ENCODE measurements at regions of chr20 and their contacts with region 1.

Region 1: DNA sequence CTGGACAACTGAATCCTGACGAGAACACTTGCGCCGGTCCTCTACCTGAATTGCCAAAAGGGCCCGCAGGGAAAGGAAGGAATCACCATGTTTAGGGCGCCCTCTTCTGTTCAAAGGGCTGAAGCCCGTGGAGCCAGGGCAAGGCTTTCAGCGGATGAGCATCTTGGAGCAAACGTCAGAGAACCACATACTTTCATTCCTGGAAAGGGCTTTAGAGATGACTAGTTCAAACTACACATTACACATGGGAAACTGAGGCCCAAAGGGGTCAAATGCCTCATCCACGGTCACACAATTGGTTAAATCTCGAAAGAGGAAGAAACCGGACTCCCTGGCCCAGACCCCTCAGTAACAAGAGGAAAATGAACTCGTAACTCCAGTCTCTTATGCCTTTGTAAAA is 11.5 kb upstream of the ZNF133 start:
- DNase-seq: peak; percentile 95
- ATAC-seq: peak; percentile 96
- H3K4me3 ChIP-seq: peak overlapping the region; percentile 41; the same call in 1 of the 2 replicates
- H3K27ac ChIP-seq: no peak overlapping the region
- H3K4me1 ChIP-seq: peaks cover 9% of the 10 kb centered on the region; the same call in 1 of the 2 replicates
- H3K27me3 ChIP-seq: no peaks in the 10 kb centered on the region
- CTCF ChIP-seq: peak; percentile 97

Region 2: DNA sequence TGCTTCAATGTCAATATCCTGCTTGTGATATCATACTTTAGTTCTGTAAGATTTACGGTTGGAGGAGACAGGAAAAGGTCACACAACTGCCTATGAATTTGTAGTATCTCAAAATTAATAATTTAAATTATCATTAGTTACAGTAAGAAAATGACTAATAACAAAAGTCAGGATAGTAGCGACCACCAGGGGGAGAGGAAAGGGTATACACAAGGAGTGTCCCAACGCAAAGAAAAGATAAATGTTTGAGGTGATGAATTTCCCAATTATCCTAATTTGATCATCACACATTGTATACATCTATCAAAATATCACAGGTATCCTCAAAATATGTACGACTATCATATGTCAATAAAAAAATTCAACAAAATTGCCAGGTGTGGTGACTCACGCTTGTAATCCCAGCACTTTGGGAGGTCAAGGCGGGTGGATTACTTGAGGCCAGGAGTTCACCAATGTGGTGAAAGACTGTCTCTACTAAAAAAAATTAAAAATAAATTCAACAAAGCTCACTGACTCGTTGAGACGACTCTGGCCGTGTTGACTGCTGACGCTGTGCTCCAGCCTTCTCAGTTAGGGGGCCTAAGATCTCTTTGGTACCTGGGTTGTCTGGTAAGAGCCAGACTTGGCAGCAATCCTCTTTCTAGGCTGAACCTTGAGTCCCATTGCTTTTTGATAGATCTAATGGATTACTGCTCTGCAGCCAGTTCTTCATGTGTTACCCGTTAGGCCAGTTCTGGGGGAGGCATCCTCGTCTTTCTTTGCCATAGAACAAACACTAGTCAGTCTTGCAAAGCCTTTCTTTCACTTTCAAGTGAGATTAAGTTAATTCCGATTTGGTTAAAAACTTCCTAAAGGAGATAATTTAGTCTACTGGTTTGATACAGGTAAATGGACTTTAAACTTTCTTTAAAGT is 210.1 kb before region 1 on chr20:
- CTCF ChIA-PET with region 1: no interaction called
- POLR2A ChIA-PET with region 1: no interaction called
- intact Hi-C with region 1: loop called (anchors 1 kb)
- DNase-seq: peak; percentile 58
- ATAC-seq: no peak; the same call in 1 of the 2 replicates
- H3K4me3 ChIP-seq: no peak overlapping the region
- H3K27ac ChIP-seq: no peak overlapping the region
- H3K4me1 ChIP-seq: peaks cover 6% of the 10 kb centered on the region; the same call in 1 of the 2 replicates
- H3K27me3 ChIP-seq: no peaks in the 10 kb centered on the region
- CTCF ChIP-seq: peak; percentile 51

Region 3: GRCh38 chr20:18137412-18138265 is 139.2 kb before region 1 on chr20 and contains the starts of genes KAT14 and PET117:
- CTCF ChIA-PET with region 1: no interaction called
- POLR2A ChIA-PET with region 1: no interaction called
- intact Hi-C with region 1: loop called (anchors 2 kb)
- DNase-seq: peak; percentile 95
- ATAC-seq: peak; percentile 88
- H3K4me3 ChIP-seq: peak within 1 kb of the TSS; percentile 92
- H3K27ac ChIP-seq: peak within 1 kb of the TSS; percentile 69
- H3K4me1 ChIP-seq: peaks cover 33% of the 10 kb centered on the region
- H3K27me3 ChIP-seq: no peaks in the 10 kb centered on the region
- CTCF ChIP-seq: no peak
- total RNA-seq, gene KAT14: 10.8 and 12.5 TPM in 2 replicates
- total RNA-seq, gene PET117: 21.2 and 31.2 TPM in 2 replicates

Region 4: DNA sequence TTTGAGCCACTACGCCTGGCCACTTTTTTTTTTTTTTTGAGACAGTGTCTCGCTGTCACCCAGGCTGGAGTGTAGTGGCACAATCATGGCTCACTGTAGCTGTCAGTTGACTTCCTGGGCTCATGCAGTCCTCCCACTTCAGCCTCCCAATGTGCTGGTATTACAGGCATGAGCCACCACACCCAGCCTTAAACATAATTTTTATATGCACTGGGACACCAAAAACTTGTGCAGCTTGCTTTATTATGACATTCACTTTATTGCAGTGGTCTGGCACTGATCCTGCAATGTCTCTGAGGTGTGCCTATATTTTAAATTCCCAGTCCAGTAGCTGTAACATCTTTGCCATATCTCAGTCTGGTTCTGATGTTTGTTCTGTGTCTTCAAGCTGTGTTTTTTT is 104.4 kb before region 1 on chr20:
- CTCF ChIA-PET with region 1: no interaction called
- POLR2A ChIA-PET with region 1: no interaction called
- intact Hi-C with region 1: loop called (anchors 5 kb)
- DNase-seq: peak; percentile 57
- ATAC-seq: peak; percentile 81
- H3K4me3 ChIP-seq: no peak overlapping the region
- H3K27ac ChIP-seq: peak overlapping the region; percentile 13
- H3K4me1 ChIP-seq: peaks cover 12% of the 10 kb centered on the region; the same call in 1 of the 2 replicates
- H3K27me3 ChIP-seq: no peaks in the 10 kb centered on the region
- CTCF ChIP-seq: no peak

Region 5: DNA sequence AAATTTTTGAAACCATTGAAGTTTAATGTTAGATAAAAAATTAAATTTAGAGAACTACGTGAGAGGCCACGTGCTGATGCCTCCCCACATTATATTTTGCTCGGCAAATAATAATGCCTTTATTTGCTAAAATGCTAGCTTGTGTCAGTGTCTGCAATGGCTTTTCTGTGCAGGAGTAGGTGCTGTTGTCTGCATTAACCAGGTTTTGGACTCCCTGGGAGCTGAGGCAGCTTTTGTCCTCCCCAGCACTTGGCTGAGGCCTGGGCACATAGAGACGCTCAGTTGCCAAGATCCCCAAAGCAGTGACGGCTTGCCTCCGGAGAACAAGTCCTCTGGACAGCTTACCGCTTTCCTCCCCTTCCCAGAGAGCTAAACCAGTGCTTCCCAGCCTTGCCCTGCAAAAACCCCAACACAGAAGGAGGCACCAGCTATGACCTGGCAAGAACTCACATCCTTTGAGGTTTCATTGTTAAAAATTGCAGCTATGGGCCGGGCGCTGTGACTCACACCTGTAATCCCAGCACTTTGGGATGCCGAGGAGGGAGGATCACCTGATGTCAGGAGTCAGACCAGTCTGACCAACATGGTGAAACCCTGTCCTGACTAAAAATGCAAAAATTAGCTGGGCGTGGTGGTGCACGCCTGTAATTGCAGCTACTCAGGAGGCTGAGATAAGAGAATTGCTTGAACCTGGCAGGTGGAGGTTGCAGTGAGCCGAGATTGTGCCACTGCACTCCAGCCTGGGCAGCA is 79.3 kb before region 1 on chr20:
- CTCF ChIA-PET with region 1: interaction called, 5 read pairs
- POLR2A ChIA-PET with region 1: no interaction called
- intact Hi-C with region 1: loop called (anchors 1 kb)
- DNase-seq: peak; percentile 97
- ATAC-seq: peak; percentile 94
- H3K4me3 ChIP-seq: peak overlapping the region; percentile 32; the same call in 1 of the 2 replicates
- H3K27ac ChIP-seq: peak overlapping the region; percentile 91
- H3K4me1 ChIP-seq: peaks cover 25% of the 10 kb centered on the region
- H3K27me3 ChIP-seq: no peaks in the 10 kb centered on the region
- CTCF ChIP-seq: peak; percentile 61